ENCODE measurements at regions of chr6 and their contacts with region 1.

Region 1: DNA sequence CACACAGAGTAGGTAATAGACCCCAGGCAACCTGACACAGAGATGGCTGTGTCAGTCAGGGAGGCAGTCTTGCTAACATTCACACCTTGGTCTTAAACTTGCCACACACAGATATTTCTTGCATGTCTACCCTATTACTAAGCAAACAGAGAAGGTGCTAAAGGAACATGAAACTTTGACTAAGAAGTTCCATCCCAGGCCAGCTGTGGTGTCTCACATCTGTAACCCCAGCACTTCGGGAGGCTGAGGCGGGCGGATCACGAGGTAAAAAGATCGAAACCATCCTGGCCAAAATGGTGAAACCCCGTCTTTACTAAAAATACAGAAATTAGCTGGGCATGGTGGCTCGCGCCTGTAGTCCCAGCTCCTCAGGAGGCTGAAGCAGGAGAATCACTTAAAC is 222.4 kb upstream of the JARID2 start:
- DNase-seq: peak; percentile 28
- H3K4me3 Mint-ChIP-seq: no peak overlapping the region
- H3K27ac Mint-ChIP-seq: peak overlapping the region; percentile 91
- H3K4me1 Mint-ChIP-seq: peaks cover 37% of the 10 kb centered on the region
- H3K27me3 Mint-ChIP-seq: no peaks in the 10 kb centered on the region

Region 2: DNA sequence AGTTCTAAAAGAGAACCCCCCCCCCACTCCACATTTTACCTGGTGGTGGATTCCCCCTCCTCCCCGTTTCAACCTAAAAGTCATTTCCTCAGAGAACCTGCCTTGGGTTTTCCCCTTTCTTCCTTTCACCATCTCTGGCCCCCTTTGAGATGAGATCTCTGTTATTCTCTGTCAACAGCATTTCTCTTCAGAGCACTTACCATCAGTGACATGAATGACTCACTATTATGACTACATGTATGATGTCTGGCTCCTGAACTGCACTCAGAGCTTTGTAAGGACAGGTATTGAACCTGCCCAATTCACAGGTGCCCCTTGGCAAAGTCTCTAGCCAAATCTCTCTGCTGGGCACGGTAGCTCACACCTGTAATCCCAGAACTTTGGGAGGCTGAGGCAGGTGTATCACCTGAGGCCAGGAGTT is 161.0 kb after region 1 on chr6:
- intact Hi-C with region 1: loop called (anchors 1 kb)
- DNase-seq: no peak
- H3K4me3 Mint-ChIP-seq: no peak overlapping the region
- H3K27ac Mint-ChIP-seq: peak overlapping the region; percentile 90
- H3K4me1 Mint-ChIP-seq: peaks cover 12% of the 10 kb centered on the region
- H3K27me3 Mint-ChIP-seq: no peaks in the 10 kb centered on the region